ENCODE measurements at regions of chr9 and their contacts with region 1.

Region 1: DNA sequence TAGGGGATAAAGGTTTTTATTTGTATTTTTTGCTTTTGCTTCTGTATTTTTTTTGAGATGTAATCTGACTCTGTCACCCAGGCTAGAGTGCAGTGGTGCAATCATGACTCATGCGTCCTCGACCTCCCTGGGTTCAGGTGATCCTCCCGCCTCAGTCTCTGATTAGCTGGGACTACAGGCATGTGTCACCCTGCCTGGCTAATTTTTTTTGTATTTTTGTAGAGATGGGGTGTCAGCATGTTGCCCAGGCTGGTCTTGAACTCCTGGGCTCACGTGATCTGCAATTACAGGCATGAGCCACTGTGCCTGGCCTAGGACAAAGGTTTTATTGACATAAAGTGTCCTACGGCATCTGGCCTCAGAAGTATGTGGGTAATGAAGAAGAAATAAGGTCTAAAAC is 297.1 kb upstream of the C9orf72 start:
- DNase-seq: no peak
- ATAC-seq: no peak
- H3K4me3 ChIP-seq: no peak overlapping the region
- H3K27ac ChIP-seq: no peak overlapping the region
- H3K4me1 ChIP-seq: peaks cover 0 to under 1% (median 0%) of the 10 kb centered on the region in 9 donors
- H3K27me3 ChIP-seq: no peaks in the 10 kb centered on the region
- CTCF ChIP-seq: no peak

Region 2: DNA sequence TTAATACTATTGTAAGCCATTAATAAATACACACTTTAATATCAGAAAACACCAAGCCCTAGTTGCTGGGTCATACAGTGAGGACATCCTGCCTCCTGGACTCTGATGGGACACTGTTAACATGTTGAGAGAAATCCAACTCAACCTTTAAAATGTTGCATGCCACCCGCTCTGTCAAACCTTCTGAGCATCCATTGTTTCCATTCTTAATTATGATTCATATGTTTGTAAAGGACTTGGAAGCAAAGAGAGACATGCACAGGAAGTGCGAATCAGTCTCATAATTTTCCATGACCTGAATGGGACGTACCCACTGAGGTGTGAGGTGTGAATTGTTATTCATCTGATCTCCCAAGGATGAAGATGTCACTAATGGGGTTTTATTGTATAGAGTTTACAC is 1164.2 kb before region 1 on chr9:
- intact Hi-C with region 1: no loop called
- DNase-seq: no peak
- ATAC-seq: no peak
- H3K4me3 ChIP-seq: no peak overlapping the region
- H3K27ac ChIP-seq: no peak overlapping the region
- H3K4me1 ChIP-seq: no peaks in the 10 kb centered on the region
- H3K27me3 ChIP-seq: no peaks in the 10 kb centered on the region
- CTCF ChIP-seq: no peak

Region 3: DNA sequence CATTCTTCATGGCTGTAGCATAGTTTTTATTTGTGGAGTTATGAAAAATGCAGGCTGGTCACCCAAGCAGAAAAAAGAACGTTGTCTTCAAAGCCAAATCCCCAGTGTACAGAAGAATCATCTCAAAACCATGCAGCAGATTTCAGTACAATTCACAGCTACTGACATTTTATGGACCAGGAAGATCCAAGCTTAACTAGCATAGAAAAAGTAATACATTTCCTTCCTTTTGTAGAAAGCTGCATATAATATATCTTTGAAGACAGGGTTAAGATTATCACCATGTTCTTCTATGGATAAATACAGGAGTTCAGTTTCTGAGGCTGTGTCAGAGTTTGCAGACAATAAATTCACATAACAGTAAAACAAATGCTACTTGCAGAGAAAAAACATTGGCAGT is 757.6 kb after region 1 on chr9:
- intact Hi-C with region 1: loop called in 1 of 10 experiments (anchors 10 kb)
- DNase-seq: no peak
- ATAC-seq: no peak
- H3K4me3 ChIP-seq: no peak overlapping the region
- H3K27ac ChIP-seq: no peak overlapping the region
- H3K4me1 ChIP-seq: no peaks in the 10 kb centered on the region
- H3K27me3 ChIP-seq: no peaks in the 10 kb centered on the region
- CTCF ChIP-seq: no peak

Measured in heart right ventricle (tissue), 16 donors.